ENCODE measurements at regions of chr10 and their contacts with region 1.

Region 1: DNA sequence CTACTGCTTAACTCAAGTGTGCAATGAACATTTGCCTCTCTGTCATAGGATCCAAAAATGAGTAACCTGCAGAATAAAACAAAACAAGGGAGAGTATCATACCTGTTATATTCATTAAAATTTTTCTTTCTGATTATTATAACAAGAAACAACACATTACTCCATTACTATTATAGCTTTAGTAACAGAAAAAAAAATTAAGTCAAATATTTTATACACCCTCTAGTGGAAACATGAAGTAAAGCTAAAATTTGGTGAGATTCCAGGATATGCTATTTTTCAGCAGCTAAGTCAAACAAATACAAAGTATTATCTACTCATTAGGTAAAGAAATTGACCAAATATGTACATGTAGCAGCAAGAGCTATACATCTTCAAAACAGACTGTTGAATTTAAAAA is 56.3 kb downstream of the PDZD8 start:
- DNase-seq: no peak
- H3K4me3 ChIP-seq: no peak overlapping the region
- CTCF ChIP-seq: no peak
- POLR2A ChIP-seq: no peak

Region 2: DNA sequence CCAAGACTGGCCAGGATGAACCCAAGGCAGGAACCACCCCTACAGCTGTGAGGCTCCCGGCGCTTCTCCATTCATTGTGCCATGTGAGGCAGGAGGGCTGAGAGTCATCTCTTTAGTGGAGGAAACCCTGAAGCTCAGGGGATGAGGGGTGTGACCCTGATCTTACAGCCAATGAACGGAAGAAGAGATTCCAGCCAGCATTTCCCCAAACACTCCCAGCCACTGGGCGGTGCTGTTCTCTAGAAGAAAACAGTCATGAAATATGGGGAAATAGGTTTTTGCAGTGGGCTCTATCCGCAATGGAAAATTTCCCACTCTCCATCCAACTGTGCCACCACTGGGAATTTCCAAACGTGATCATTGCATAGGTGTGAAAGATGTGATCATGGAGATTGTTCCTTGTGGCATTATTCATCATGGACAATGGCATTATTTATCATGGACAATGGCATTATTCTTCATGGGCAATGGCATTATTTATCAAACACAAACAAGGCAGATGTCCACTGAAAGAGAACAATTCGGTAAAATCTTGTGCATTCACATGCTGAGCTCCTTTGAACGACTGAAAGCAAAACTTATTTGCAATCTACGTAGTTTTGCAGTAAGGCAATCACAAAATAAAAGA is 92.0 kb before region 1 on chr10:
- intact Hi-C with region 1: loop called (anchors 10 kb)
- DNase-seq: no peak
- H3K4me3 ChIP-seq: no peak overlapping the region
- CTCF ChIP-seq: no peak
- POLR2A ChIP-seq: no peak

Measured in lower leg skin (tissue), 4 donors.